Common myeloid progenitor, CD34-positive (primary cell): ENCODE measurements at regions of chr11 and their contacts with region 1.

Region 1: GRCh38 chr11:6362873-6363678 is 27.2 kb upstream of the SMPD1 start:
- DNase-seq: peak; percentile 51 to 79 (median 74)
- H3K4me3 ChIP-seq: no peak overlapping the region
- H3K27ac ChIP-seq: no peak overlapping the region
- H3K4me1 ChIP-seq: no peaks in the 10 kb centered on the region
- H3K27me3 ChIP-seq: peaks cover 0 to 2% (median 0%) of the 10 kb centered on the region in 5 experiments

Region 2: DNA sequence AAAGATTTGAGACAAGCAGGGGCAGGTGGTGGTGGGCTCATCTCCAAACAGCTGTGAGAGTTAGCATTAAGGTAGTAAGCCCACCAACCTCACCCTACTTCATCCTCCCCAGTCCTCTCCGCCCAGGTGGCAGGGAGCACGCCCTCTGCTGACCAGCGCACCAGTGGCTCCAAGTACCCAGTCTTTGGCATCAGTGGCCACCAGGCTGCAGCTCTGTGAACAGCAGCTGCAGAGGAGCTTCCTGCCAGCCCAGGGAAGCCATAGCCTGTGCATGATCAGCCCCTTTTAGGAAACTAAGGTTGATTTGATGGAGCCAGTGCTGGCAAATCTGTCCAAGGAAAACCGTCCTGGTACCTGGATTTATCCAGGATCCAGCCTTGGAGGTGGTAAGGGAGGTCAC is 64.5 kb before region 1 on chr11:
- CTCF ChIA-PET with region 1: interaction called, 12 read pairs
- POLR2A ChIA-PET with region 1: no interaction called
- DNase-seq: peak; percentile 15 to 37 (median 31)
- H3K4me3 ChIP-seq: no peak overlapping the region
- H3K27ac ChIP-seq: no peak overlapping the region
- H3K4me1 ChIP-seq: no peaks in the 10 kb centered on the region
- H3K27me3 ChIP-seq: peaks cover 0 to 10% (median 0%) of the 10 kb centered on the region in 5 experiments